Adrenal gland (tissue), 19 donors: ENCODE measurements at regions of chr21 and their contacts with region 1.

Region 1: GRCh38 chr21:38511662-38512243 is 13.5 kb upstream of the ERG start:
- DNase-seq: no peak
- H3K4me3 ChIP-seq: no peak overlapping the region
- H3K27ac ChIP-seq: no peak overlapping the region
- H3K4me1 ChIP-seq: no peaks in the 10 kb centered on the region
- H3K27me3 ChIP-seq: no peaks in the 10 kb centered on the region
- CTCF ChIP-seq: no peak
- POLR2A ChIP-seq: no peak

Region 2: DNA sequence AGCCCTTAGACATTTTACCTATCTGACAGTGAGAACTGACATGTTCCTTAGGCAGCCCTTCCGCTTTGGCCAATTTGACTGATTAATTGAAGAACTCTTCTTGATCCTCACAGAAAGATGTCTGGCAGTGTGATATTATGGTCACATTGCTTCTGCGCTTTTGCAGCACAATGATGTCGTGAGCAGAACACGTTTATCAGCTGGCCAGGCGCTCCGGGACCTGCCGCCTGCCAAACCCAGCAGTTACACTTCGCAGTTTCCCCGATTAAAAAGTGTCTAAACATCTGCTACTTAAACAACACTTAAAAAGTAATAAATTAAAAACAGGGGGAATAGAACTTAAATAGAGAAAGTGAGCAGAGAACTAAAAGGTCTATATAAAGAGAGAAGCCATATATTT is 190.4 kb after region 1 on chr21:
- intact Hi-C with region 1: loop called in 1 of 2 experiments (anchors 10 kb)
- DNase-seq: no peak
- H3K4me3 ChIP-seq: no peak overlapping the region
- H3K27ac ChIP-seq: no peak overlapping the region
- H3K4me1 ChIP-seq: no peaks in the 10 kb centered on the region
- H3K27me3 ChIP-seq: peaks cover 14% of the 10 kb centered on the region
- CTCF ChIP-seq: no peak
- POLR2A ChIP-seq: no peak